ENCODE measurements at regions of chr1 and their contacts with region 1.

Region 1: GRCh38 chr1:151739590-151740375 is 18.5 kb downstream of the RIIAD1 start:
- DNase-seq: no peak
- H3K4me3 ChIP-seq: no peak overlapping the region
- H3K27ac ChIP-seq: no peak overlapping the region
- H3K4me1 ChIP-seq: peaks cover 0 to 3% (median 0%) of the 10 kb centered on the region in 6 donors
- H3K27me3 ChIP-seq: no peaks in the 10 kb centered on the region
- CTCF ChIP-seq: no peak
- POLR2A ChIP-seq: no peak

Region 2: DNA sequence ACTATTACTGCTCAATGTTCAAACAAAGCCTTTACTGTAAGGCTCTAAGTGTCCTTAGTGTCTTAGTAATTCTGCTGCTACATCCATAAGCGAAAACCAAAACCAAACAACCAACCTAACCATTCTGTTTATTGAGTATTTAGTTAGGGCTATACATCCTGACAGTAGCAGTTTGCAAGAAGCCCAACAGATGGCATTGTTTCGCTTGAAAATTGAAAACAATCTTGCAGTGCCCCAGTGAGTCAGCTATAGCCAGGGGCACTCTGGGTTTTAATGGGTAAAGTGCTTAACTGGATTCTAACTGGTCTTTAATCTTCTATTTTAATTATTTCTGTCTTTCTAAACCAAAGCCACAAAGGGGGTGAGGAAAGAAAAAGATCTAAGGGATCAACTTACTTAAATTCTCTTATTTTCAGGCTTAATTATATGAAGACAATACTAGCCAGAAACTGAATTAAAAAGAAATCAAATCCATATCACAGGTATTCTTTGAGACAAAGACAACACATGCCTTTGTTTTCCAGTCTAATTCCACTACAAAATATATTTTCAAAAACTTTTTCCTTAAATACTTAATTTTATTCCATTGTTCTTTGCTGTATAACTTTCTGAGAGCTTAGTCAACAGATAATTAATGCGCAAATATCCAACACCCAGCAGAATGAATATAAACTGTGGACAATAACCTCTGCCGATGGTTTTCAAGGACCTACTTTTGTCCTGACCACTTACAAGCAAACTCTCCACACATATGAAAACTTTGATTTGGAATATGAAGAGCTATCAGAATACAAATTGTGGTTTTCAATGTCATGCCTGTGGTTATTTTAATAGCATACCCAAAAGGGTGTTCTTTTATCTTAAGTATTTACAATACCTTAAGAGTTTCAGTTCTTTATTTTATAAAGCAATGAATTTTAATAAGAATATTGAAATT is 295.7 kb before region 1 on chr1:
- intact Hi-C with region 1: loop called (anchors 10 kb)
- DNase-seq: no peak
- H3K4me3 ChIP-seq: no peak overlapping the region
- H3K27ac ChIP-seq: peak overlapping the region in 4 of 8 donors; percentile 8 to 57 (median 41)
- H3K4me1 ChIP-seq: peaks cover 25 to 92% (median 55%) of the 10 kb centered on the region in 6 donors
- H3K27me3 ChIP-seq: no peaks in the 10 kb centered on the region
- CTCF ChIP-seq: peak; percentile 46 to 82 (median 69)
- POLR2A ChIP-seq: no peak

Region 3: GRCh38 chr1:151594143-151594625 is 145.6 kb before region 1 on chr1:
- intact Hi-C with region 1: loop called (anchors 5 kb)
- DNase-seq: peak; percentile 96
- H3K4me3 ChIP-seq: peak overlapping the region in 2 of 8 donors; percentile 14 to 39
- H3K27ac ChIP-seq: peak overlapping the region in 2 of 8 donors; percentile 4 to 40
- H3K4me1 ChIP-seq: peaks cover 0 to 14% (median 9%) of the 10 kb centered on the region in 6 donors
- H3K27me3 ChIP-seq: no peaks in the 10 kb centered on the region
- CTCF ChIP-seq: peak; percentile 74 to 96 (median 93)
- POLR2A ChIP-seq: no peak